Body of pancreas (tissue), 4 donors: ENCODE measurements at regions of chr4 and their contacts with region 1.

Region 1: DNA sequence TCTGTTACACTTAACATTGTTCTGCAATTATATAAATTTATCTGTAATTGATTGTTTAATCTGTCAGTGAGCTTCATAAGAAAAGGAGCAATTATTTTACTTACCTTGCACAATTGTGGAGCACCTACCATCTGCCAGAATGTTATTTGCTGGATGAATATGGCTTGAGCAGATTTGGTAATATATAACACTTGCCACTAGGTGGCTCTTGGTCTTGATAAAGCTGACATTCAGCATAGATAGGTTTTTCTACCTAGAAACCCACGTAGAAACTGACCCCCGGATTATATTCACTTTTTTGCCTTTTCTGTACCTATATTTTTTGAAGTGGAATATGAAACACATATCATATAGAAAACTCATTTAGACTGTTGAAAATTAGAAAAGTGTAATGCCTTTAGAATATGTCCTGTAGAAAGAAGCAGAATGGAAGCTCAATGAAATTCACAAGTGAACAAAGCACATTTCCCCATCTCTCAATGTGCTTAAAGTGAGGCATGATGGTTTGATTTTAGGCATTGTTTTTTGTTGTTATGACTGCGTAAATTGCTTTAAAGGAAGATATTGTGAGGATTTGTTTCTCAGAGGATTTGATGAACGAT is 9.5 kb downstream of the RBPJ start:
- DNase-seq: peak in 1 of 4 donors; percentile 43
- ATAC-seq: peak; percentile 82
- H3K4me3 ChIP-seq: no peak overlapping the region
- H3K27ac ChIP-seq: no peak overlapping the region
- H3K4me1 ChIP-seq: peaks cover 29% of the 10 kb centered on the region
- H3K27me3 ChIP-seq: no peaks in the 10 kb centered on the region
- CTCF ChIP-seq: peak; percentile 49 to 80 (median 70)
- POLR2A ChIP-seq: no peak

Region 2: DNA sequence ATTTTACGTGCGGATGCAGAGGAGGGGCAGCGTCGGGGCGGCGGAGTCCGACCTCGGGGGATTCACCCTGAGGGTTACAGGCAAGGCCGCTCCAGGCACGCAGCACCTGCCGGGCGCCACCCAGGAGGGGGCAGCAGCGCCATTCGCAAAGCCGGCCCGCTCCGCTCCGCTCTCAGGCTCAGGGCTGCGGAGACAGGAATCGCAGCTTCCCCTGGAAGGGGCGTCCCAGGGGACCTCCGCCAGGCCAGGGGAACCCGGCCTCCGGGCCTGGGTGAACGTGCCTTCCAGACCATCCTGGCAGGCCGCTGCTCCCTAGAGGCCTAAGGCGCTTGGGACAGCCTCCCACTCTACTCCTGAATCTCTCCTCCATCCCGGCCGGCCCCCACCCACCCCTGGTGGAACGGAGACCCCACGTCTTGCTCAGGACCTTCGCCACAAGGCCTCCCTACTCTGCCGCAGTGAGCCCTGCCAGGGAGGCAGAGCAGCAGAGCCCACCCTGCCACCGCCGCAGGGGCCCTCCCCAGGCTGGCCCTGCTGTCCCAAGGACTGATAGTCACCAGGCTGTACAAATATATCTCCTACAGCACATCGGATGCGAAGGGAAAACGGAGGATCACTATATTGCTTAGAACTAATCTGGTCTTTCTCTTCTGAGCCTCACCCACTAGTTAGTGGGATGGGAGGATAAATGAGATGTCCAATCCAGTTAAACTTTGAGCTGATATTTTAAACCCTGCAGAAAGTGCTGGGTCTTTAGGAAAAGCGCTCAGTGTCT is 301.3 kb before region 1 on chr4:
- intact Hi-C with region 1: no loop called
- DNase-seq: peak; percentile 71 to 81 (median 78)
- ATAC-seq: peak; percentile 89
- H3K4me3 ChIP-seq: no peak overlapping the region
- H3K27ac ChIP-seq: no peak overlapping the region
- H3K4me1 ChIP-seq: peaks cover 13% of the 10 kb centered on the region
- H3K27me3 ChIP-seq: no peaks in the 10 kb centered on the region
- CTCF ChIP-seq: peak; percentile 71 to 87 (median 83)
- POLR2A ChIP-seq: no peak

Region 3: DNA sequence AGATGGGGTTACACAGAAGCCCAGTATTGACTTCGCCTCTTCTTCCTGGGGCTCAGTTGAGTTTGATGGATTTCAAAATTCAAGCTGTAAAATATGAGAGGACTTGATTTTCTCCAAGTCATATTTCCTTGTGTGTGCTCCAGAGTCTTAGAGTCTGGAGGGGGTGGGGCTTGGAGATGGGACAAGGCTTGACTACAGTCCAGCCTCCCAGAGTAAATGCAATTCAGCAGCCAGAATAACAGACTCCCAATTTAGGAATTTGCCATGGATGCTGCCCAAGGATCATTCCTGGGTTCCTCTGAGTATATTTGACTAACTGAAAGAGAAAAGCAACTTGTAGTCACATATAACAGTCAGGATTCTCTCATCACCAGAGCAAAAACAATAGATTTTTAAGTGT is 63.2 kb before region 1 on chr4:
- intact Hi-C with region 1: no loop called
- DNase-seq: peak; percentile 25 to 63 (median 46)
- ATAC-seq: peak; percentile 40
- H3K4me3 ChIP-seq: no peak overlapping the region
- H3K27ac ChIP-seq: no peak overlapping the region
- H3K4me1 ChIP-seq: no peaks in the 10 kb centered on the region
- H3K27me3 ChIP-seq: no peaks in the 10 kb centered on the region
- CTCF ChIP-seq: no peak
- POLR2A ChIP-seq: no peak

Region 4: GRCh38 chr4:26404743-26405206 is 74.5 kb after region 1 on chr4:
- intact Hi-C with region 1: loop called (anchors 10 kb)
- DNase-seq: no peak
- ATAC-seq: no peak
- H3K4me3 ChIP-seq: no peak overlapping the region
- H3K27ac ChIP-seq: no peak overlapping the region
- H3K4me1 ChIP-seq: peaks cover 4% of the 10 kb centered on the region
- H3K27me3 ChIP-seq: no peaks in the 10 kb centered on the region
- CTCF ChIP-seq: peak in 4 of 7 experiments; percentile 22 to 32 (median 28)
- POLR2A ChIP-seq: no peak